ENCODE measurements at regions of chr7 and their contacts with region 1.

Region 1: GRCh38 chr7:114865564-114865963 is 56.3 kb upstream of the MDFIC start:
- DNase-seq: peak; percentile 27 to 46 (median 38)
- H3K4me3 ChIP-seq: no peak overlapping the region
- H3K4me3 Mint-ChIP-seq: no peak overlapping the region
- H3K27ac ChIP-seq: no peak overlapping the region
- H3K27ac Mint-ChIP-seq: no peak overlapping the region
- H3K4me1 ChIP-seq: no peaks in the 10 kb centered on the region
- H3K4me1 Mint-ChIP-seq: no peaks in the 10 kb centered on the region
- H3K27me3 ChIP-seq: no peaks in the 10 kb centered on the region
- H3K27me3 Mint-ChIP-seq: no peaks in the 10 kb centered on the region
- CTCF ChIP-seq: peak; percentile 81

Region 2: DNA sequence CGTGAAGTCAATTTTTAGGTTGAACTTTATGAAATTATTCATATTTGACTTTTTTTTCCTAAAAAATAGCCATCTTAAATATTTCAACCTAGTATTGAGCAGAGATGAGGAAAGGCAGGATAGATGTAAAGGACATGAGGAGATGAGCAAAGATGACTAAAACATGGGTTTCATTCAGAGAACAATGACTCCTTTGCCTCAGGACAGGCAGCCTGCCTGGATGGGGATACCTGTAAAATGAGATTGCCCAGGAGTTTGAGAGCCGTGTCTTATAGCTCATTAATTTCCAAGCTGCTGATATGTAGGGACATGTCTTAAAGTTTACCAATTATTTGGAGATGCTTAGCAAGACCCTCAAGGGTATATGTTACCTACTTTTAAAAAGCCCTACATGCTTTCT is 187.4 kb before region 1 on chr7:
- intact Hi-C with region 1: no loop called
- DNase-seq: no peak
- H3K4me3 ChIP-seq: no peak overlapping the region
- H3K4me3 Mint-ChIP-seq: no peak overlapping the region
- H3K27ac ChIP-seq: no peak overlapping the region
- H3K27ac Mint-ChIP-seq: no peak overlapping the region
- H3K4me1 ChIP-seq: no peaks in the 10 kb centered on the region
- H3K4me1 Mint-ChIP-seq: no peaks in the 10 kb centered on the region
- H3K27me3 ChIP-seq: no peaks in the 10 kb centered on the region
- H3K27me3 Mint-ChIP-seq: peaks cover 0 to 3% (median 0%) of the 10 kb centered on the region in 3 donors
- CTCF ChIP-seq: no peak

Region 3: GRCh38 chr7:115217373-115217772 is 351.8 kb after region 1 on chr7:
- intact Hi-C with region 1: loop called in 1 of 2 experiments (anchors 10 kb)
- DNase-seq: no peak
- H3K4me3 ChIP-seq: no peak overlapping the region
- H3K4me3 Mint-ChIP-seq: no peak overlapping the region
- H3K27ac ChIP-seq: no peak overlapping the region
- H3K27ac Mint-ChIP-seq: no peak overlapping the region
- H3K4me1 ChIP-seq: no peaks in the 10 kb centered on the region
- H3K4me1 Mint-ChIP-seq: no peaks in the 10 kb centered on the region
- H3K27me3 ChIP-seq: no peaks in the 10 kb centered on the region
- H3K27me3 Mint-ChIP-seq: peaks cover 0 to 2% (median 2%) of the 10 kb centered on the region in 3 donors
- CTCF ChIP-seq: peak; percentile 40

Measured in CD14-positive monocyte (primary cell).